ENCODE measurements at regions of chr5 and their contacts with region 1.

Region 1: DNA sequence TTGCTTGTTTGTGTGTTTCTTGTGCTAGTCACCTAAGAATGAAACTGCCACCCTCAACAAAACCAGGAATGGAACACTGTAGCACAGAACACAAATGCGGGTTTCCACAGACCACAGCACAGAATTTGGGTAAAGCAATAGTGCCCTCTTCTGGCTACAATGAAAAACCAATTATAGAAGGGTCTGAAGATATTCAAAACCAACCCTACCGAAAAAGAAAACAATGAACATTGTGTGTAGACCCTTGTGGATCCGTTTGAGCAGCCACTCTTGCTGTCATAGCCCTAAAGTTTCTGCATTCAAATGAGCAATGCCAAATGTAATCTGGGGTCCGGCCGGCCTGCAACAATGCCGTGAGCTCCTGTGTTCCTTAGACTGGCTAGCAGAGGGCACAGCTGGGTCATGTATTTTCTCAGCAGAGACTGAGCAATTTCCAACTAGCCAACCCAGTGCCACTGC is 8.3 kb upstream of the ENC1 start:
- DNase-seq: peak in 1 of 2 experiments; percentile 66
- H3K4me3 ChIP-seq: no peak overlapping the region
- H3K4me3 Mint-ChIP-seq: no peak overlapping the region
- H3K27ac Mint-ChIP-seq: no peak overlapping the region
- H3K4me1 ChIP-seq: peaks cover 7% of the 10 kb centered on the region
- H3K4me1 Mint-ChIP-seq: peaks cover 11% of the 10 kb centered on the region
- H3K27me3 ChIP-seq: no peaks in the 10 kb centered on the region
- H3K27me3 Mint-ChIP-seq: no peaks in the 10 kb centered on the region
- CTCF ChIP-seq: peak; percentile 68 to 77

Region 2: DNA sequence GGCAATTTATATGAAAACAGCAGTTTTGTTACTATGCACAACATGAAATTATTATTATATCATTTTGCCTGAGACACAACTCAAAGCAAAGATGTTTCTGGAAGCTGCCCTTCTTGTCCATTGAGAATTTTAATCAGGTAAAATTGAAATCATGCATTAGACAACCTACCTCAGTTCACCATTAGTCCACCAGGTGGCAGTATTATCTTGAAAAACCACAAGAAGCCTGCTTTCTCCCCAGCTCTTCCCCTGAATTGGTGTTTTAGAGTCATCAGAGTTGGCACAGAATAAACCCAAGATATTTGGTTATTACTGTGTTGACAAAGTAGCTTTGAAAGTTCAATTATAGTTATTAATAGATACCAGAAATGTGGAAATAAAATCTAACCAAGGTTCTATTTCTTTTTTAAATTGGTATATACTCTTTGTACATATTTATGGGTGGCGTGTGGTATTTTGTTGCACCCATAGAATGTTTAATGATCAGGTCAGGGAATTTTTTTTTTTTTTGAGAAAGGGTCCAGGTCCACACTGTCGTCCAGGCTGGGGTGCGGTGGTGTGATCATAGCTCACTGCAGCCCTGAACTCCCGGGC is 1057.7 kb before region 1 on chr5:
- CTCF ChIA-PET with region 1: no interaction called
- POLR2A ChIA-PET with region 1: no interaction called
- intact Hi-C with region 1: loop called (anchors 2 kb)
- DNase-seq: peak; percentile 45 to 69
- H3K4me3 ChIP-seq: no peak overlapping the region
- H3K4me3 Mint-ChIP-seq: no peak overlapping the region
- H3K27ac Mint-ChIP-seq: no peak overlapping the region
- H3K4me1 ChIP-seq: no peaks in the 10 kb centered on the region
- H3K4me1 Mint-ChIP-seq: no peaks in the 10 kb centered on the region
- H3K27me3 ChIP-seq: no peaks in the 10 kb centered on the region
- H3K27me3 Mint-ChIP-seq: no peaks in the 10 kb centered on the region
- CTCF ChIP-seq: peak; percentile 65 to 82

Region 3: GRCh38 chr5:73902327-73903051 is 746.4 kb before region 1 on chr5:
- CTCF ChIA-PET with region 1: no interaction called
- POLR2A ChIA-PET with region 1: no interaction called
- intact Hi-C with region 1: loop called (anchors 1 kb)
- DNase-seq: peak in 1 of 2 experiments; percentile 42
- H3K4me3 ChIP-seq: no peak overlapping the region
- H3K4me3 Mint-ChIP-seq: no peak overlapping the region
- H3K27ac Mint-ChIP-seq: no peak overlapping the region
- H3K4me1 ChIP-seq: no peaks in the 10 kb centered on the region
- H3K4me1 Mint-ChIP-seq: no peaks in the 10 kb centered on the region
- H3K27me3 ChIP-seq: no peaks in the 10 kb centered on the region
- H3K27me3 Mint-ChIP-seq: no peaks in the 10 kb centered on the region
- CTCF ChIP-seq: peak; percentile 41 to 85

Region 4: DNA sequence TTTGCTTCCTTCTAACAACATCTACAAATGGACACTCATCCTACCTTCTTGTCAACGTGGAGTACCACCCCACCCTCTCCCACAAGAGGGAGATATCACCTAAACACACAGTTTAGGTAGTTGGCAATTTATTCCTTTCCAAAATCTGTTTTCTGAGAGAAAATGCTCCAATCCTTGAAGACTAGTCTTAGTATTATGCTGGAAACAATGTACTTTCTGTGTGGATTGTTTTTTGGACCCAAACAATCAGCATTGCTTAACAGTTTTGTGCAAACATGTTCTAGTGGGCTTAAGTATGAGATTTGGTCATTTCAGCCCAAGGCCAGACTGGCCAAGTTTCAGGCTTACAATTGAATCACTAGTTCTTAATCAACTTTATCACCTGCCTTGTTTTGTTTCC is 663.7 kb before region 1 on chr5:
- CTCF ChIA-PET with region 1: interaction called, 4 read pairs
- POLR2A ChIA-PET with region 1: no interaction called
- intact Hi-C with region 1: loop called (anchors 1 kb)
- DNase-seq: peak in 1 of 2 experiments; percentile 29
- H3K4me3 ChIP-seq: no peak overlapping the region
- H3K4me3 Mint-ChIP-seq: no peak overlapping the region
- H3K27ac Mint-ChIP-seq: no peak overlapping the region
- H3K4me1 ChIP-seq: peaks cover 15% of the 10 kb centered on the region
- H3K4me1 Mint-ChIP-seq: peaks cover 7% of the 10 kb centered on the region
- H3K27me3 ChIP-seq: no peaks in the 10 kb centered on the region
- H3K27me3 Mint-ChIP-seq: no peaks in the 10 kb centered on the region
- CTCF ChIP-seq: peak in 1 of 2 experiments; percentile 45

Region 5: GRCh38 chr5:74035521-74035981 is 613.3 kb before region 1 on chr5:
- CTCF ChIA-PET with region 1: no interaction called
- POLR2A ChIA-PET with region 1: no interaction called
- intact Hi-C with region 1: loop called (anchors 1 kb)
- DNase-seq: peak; percentile 63 to 71
- H3K4me3 ChIP-seq: no peak overlapping the region
- H3K4me3 Mint-ChIP-seq: no peak overlapping the region
- H3K27ac Mint-ChIP-seq: no peak overlapping the region
- H3K4me1 ChIP-seq: 0 out of 2 replicates have a peak, but pooled peaks cover 5% of the 10 kb centered on the region
- H3K4me1 Mint-ChIP-seq: peaks cover 7% of the 10 kb centered on the region
- H3K27me3 ChIP-seq: no peaks in the 10 kb centered on the region
- H3K27me3 Mint-ChIP-seq: no peaks in the 10 kb centered on the region
- CTCF ChIP-seq: peak; percentile 40 to 46

Region 6: GRCh38 chr5:74567461-74567860 is 81.4 kb before region 1 on chr5:
- CTCF ChIA-PET with region 1: no interaction called
- POLR2A ChIA-PET with region 1: no interaction called
- intact Hi-C with region 1: no loop called
- DNase-seq: peak; percentile 37 to 41
- H3K4me3 ChIP-seq: no peak overlapping the region
- H3K4me3 Mint-ChIP-seq: no peak overlapping the region
- H3K27ac Mint-ChIP-seq: peak overlapping the region; percentile 18
- H3K4me1 ChIP-seq: peaks cover 21% of the 10 kb centered on the region
- H3K4me1 Mint-ChIP-seq: peaks cover 23% of the 10 kb centered on the region
- H3K27me3 ChIP-seq: no peaks in the 10 kb centered on the region
- H3K27me3 Mint-ChIP-seq: no peaks in the 10 kb centered on the region
- CTCF ChIP-seq: no peak

Region 7: DNA sequence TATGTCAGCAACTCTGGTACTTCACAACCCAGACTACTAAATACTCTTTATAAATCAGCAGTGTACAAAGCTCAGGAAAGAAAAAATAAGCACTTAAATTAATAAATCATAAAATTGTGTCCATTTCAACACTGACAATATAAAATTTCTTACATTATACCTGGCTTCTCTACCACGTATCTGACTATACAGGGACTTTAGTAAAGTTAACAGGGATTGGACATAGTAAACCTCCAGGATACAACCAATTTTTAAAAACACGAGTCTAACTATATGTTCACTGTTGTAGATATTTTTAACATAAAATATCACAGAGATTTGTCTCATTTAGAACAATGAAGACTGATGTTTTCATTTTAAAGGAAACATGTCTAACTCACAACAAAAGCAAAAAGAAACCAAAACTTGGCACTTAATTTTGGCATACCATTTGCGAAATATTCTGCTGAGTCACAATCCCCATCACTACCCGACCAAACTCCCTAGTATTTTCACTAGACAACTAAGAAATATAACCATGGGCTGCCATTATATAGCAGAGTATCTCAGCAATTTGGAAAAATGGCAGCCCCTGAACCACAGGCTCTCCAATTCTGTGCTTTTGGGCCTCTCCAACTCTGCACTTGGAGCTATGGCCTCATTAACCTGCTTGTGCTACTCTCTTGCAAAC is 203.0 kb after region 1 on chr5:
- CTCF ChIA-PET with region 1: no interaction called
- POLR2A ChIA-PET with region 1: no interaction called
- intact Hi-C with region 1: no loop called
- DNase-seq: no peak
- H3K4me3 ChIP-seq: no peak overlapping the region
- H3K4me3 Mint-ChIP-seq: no peak overlapping the region
- H3K27ac Mint-ChIP-seq: no peak overlapping the region
- H3K4me1 ChIP-seq: peaks cover 12% of the 10 kb centered on the region
- H3K4me1 Mint-ChIP-seq: peaks cover 15% of the 10 kb centered on the region
- H3K27me3 ChIP-seq: no peaks in the 10 kb centered on the region
- H3K27me3 Mint-ChIP-seq: no peaks in the 10 kb centered on the region
- CTCF ChIP-seq: no peak

Measured in Caco-2 (cell line).